ENCODE measurements at regions of chr12 and their contacts with region 1.

Region 1: DNA sequence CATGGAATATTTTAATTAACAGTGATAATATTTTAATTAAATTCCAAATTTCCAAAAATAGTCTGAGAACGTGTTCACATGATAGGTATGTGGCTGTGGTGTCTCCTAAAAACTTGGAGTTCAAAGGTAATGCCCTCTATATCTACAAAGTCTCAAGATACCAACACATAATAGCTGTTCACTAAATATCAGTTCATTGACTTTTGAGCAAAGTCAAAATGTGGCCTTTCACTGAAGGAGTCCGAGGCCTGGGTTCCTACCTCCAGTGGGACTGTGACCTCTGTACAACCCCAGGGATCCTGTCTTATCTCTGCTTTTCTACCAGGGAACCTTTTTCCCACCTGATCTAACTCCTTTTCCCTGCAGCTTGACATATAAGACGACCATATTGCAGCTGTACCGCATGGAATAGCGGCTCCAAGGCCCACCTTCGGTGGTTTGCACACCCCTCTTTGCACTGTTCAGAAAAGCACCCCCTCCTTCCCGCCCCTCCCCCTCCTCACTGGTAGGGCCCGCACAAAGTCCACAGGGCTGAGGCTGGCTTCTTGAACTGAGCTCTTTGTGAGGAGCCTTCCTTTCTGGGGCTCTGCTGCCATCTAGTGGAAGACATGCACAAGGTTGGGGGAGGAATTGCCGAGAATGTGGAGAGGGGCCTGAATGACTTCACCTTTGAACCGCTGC is 3.1 kb downstream of the CCND2 start:
- DNase-seq: peak; percentile 78
- CTCF ChIP-seq: peak; percentile 85

Region 2: GRCh38 chr12:3299929-3300832 is 976.5 kb before region 1 on chr12:
- CTCF ChIA-PET with region 1: interaction called, 16 read pairs
- POLR2A ChIA-PET with region 1: no interaction called
- DNase-seq: peak; percentile 83
- CTCF ChIP-seq: peak; percentile 95

Region 3: GRCh38 chr12:3998968-3999826 is 277.5 kb before region 1 on chr12:
- CTCF ChIA-PET with region 1: interaction called, 128 read pairs
- POLR2A ChIA-PET with region 1: no interaction called
- DNase-seq: no peak
- CTCF ChIP-seq: no peak

Region 4: GRCh38 chr12:4107436-4107878 is 169.2 kb before region 1 on chr12:
- CTCF ChIA-PET with region 1: interaction called, 82 read pairs
- POLR2A ChIA-PET with region 1: no interaction called
- DNase-seq: peak; percentile 84
- CTCF ChIP-seq: peak; percentile 67

Region 5: DNA sequence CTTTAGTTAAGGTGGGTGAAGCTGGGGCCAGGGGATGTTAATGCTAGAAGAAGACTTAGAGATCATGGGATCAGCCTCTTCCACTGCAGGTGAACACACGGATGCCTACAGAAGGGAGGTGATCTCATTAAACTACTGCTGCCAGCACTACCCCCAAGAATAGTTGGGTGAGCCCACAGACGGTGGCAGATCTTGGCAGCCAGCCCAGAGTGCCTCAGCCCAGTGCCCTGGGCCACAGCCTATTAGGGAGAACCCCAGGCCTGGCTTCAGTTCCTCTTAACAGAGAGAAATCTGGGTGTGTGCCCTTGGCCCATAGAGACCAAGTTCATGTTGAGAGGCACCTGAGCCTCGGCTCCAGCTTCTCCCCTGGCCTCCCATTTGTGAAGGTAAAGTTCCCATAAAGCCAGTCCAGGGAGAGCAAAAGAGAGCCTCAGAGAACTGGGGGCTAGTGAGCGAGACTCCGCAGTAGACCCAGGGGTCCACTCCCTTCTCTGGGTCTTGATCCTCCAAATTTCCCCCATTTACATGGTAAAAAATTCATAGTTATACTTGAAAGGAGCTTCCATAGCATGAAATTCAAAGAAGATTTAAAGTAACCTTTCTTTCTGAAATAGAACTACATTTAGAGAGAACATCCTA is 128.1 kb before region 1 on chr12:
- CTCF ChIA-PET with region 1: interaction called, 16 read pairs
- POLR2A ChIA-PET with region 1: no interaction called
- DNase-seq: peak; percentile 47
- CTCF ChIP-seq: no peak

Region 6: GRCh38 chr12:4261655-4262054 is 15.0 kb before region 1 on chr12:
- CTCF ChIA-PET with region 1: interaction called, 10 read pairs
- POLR2A ChIA-PET with region 1: no interaction called
- DNase-seq: peak; percentile 46
- CTCF ChIP-seq: no peak